ENCODE measurements at regions of chr1 and their contacts with region 1.

Region 1: DNA sequence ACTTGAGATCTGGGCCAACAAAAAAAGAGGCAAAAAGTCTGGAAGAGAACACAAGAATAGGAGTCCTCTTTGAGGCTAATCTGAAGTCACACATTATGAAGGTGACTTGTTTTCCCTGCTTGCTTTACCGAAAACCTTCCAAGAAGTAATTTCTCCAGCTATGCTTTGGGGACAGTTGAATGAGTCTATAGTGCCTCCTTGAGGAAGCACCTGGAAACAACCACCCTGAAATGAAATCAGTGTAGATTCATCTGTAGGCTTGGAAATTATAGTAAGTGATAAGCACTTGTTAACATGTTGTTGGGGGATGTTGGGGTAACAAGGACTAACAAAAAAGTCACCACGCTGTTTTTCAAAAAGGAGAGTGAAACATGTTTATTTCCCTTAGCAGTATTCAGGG is 23.4 kb upstream of the RPTN start:
- DNase-seq: peak in 1 of 35 experiments; percentile 11
- ATAC-seq: no peak
- H3K4me3 ChIP-seq: no peak overlapping the region
- H3K4me3 Mint-ChIP-seq: no peak overlapping the region
- H3K27ac ChIP-seq: no peak overlapping the region
- H3K27ac Mint-ChIP-seq: no peak overlapping the region
- H3K4me1 ChIP-seq: no peaks in the 10 kb centered on the region
- H3K4me1 Mint-ChIP-seq: peaks cover 0 to 3% (median 0%) of the 10 kb centered on the region in 3 donors
- H3K27me3 ChIP-seq: no peaks in the 10 kb centered on the region
- H3K27me3 Mint-ChIP-seq: peaks cover 3 to 6% of the 10 kb centered on the region in 2 donors

Region 2: GRCh38 chr1:152078831-152079441 is 103.5 kb before region 1 on chr1:
- CTCF ChIA-PET with region 1: no interaction called
- POLR2A ChIA-PET with region 1: no interaction called
- DNase-seq: no peak
- ATAC-seq: no peak
- H3K4me3 ChIP-seq: no peak overlapping the region
- H3K4me3 Mint-ChIP-seq: no peak overlapping the region
- H3K27ac ChIP-seq: no peak overlapping the region
- H3K27ac Mint-ChIP-seq: no peak overlapping the region
- H3K4me1 ChIP-seq: no peaks in the 10 kb centered on the region
- H3K4me1 Mint-ChIP-seq: no peaks in the 10 kb centered on the region
- H3K27me3 ChIP-seq: peaks cover 0 to 16% of the 10 kb centered on the region in 2 experiments
- H3K27me3 Mint-ChIP-seq: peaks cover 25 to 29% of the 10 kb centered on the region in 2 donors

Region 3: GRCh38 chr1:152912471-152912870 is 730.0 kb after region 1 on chr1:
- CTCF ChIA-PET with region 1: no interaction called
- POLR2A ChIA-PET with region 1: interaction called in 1 of 2 experiments, 10 read pairs
- DNase-seq: no peak
- ATAC-seq: no peak
- H3K4me3 ChIP-seq: no peak overlapping the region
- H3K4me3 Mint-ChIP-seq: no peak overlapping the region
- H3K27ac ChIP-seq: no peak overlapping the region
- H3K27ac Mint-ChIP-seq: no peak overlapping the region
- H3K4me1 ChIP-seq: no peaks in the 10 kb centered on the region
- H3K4me1 Mint-ChIP-seq: no peaks in the 10 kb centered on the region
- H3K27me3 ChIP-seq: peaks cover 0 to 28% of the 10 kb centered on the region in 2 experiments
- H3K27me3 Mint-ChIP-seq: peaks cover 32 to 38% of the 10 kb centered on the region in 2 donors